Left cardiac atrium (tissue), 4 donors: ENCODE measurements at regions of chr19 and their contacts with region 1.

Region 1: GRCh38 chr19:44002566-44003460 is at the start of gene ZNF230:
- DNase-seq: peak; percentile 93
- ATAC-seq: peak; percentile 100
- total RNA-seq, gene ZNF230: 3.5 to 3.7 TPM

Region 2: DNA sequence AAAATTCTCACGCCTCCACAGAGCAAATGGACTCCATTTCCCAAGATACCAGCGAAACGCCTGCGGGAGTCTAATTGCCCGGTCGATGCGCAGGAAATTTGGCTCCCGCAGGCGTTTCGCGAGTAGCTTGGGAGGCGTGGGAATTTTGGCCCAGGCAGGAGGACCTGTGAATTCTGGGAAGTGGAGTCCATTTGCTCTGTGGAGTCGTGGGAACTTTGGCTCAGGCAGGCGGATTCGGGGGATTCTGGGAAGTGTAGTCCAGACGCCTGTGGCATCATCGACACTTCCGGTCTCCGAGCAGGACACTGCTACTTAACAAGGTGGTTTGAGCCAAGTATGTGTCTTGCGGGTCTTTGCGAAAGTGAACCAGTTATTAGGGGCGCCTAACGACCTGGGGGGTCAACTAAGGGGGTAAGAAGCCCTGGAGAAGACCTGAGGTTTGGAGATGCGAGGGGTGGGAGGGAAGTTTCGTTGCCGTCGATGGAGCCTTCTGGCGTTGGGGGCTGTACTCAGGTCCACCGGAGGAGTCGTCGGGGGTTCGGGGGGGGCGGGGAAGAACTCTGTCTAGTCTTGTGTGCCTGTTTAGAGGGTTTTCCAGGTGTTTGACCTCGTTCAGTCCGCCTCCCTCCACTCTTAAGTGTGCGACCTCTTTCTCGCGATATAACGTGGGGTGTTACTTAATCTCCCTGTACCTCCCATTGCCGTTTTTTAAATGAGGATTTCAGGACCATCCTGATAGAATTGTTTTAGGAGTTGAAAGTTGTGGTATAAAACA is 18.7 kb before region 1 on chr19 and contains the start of gene ZNF155:
- intact Hi-C with region 1: loop called in 1 of 2 experiments (anchors 2 kb)
- DNase-seq: peak; percentile 94
- ATAC-seq: peak; percentile 100
- total RNA-seq, gene ZNF155: 6.8 to 9.2 TPM

Region 3: GRCh38 chr19:44025217-44025936 is 22.6 kb after region 1 on chr19 and contains the start of gene ZNF222:
- intact Hi-C with region 1: loop called in 1 of 2 experiments (anchors 2 kb)
- DNase-seq: peak; percentile 91
- ATAC-seq: peak; percentile 100
- total RNA-seq, gene ZNF222: 3.5 to 4.0 TPM

Region 4: GRCh38 chr19:44051654-44052402 is 49.0 kb after region 1 on chr19 and contains the start of gene ZNF223:
- intact Hi-C with region 1: no loop called
- DNase-seq: peak; percentile 96
- ATAC-seq: peak; percentile 100
- total RNA-seq, gene ZNF223: 2.8 to 2.9 TPM

Region 5: DNA sequence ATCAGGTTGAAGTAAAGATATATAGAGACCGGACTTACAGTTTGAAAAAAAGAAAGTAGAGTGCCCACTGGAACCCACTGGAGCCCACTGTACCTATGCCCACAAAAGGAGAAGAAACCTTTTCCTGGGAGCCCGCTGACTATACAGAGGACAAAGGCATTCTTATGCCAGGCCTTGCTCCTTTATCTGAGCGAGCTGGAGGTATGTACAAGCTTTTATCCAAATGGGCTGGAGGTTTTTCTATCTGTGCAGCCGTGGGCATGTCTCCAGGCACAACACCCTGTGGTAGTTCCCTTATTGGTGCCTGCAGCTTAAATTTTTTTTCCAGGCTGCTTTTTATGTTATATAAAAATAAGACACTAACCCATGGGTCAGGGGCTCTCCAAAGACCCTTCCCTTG is 147.0 kb after region 1 on chr19:
- intact Hi-C with region 1: no loop called
- DNase-seq: no peak
- ATAC-seq: no peak